Calu3 (cell line): ENCODE measurements at regions of chr14 and their contacts with region 1.

Region 1: GRCh38 chr14:36647824-36648753 is 13.6 kb upstream of the PAX9 start:
- DNase-seq: peak; percentile 63
- H3K4me3 Mint-ChIP-seq: peak overlapping the region; percentile 79
- H3K27ac Mint-ChIP-seq: no peak overlapping the region
- H3K4me1 Mint-ChIP-seq: no peaks in the 10 kb centered on the region
- H3K27me3 Mint-ChIP-seq: peaks cover 44% of the 10 kb centered on the region
- CTCF ChIP-seq: peak; percentile 55

Region 2: GRCh38 chr14:37116933-37117849 is 469.1 kb after region 1 on chr14:
- CTCF ChIA-PET with region 1: interaction called, 25 read pairs
- intact Hi-C with region 1: loop called (anchors 5 kb)
- DNase-seq: no peak
- H3K4me3 Mint-ChIP-seq: no peak overlapping the region
- H3K27ac Mint-ChIP-seq: no peak overlapping the region
- H3K4me1 Mint-ChIP-seq: peaks cover 8% of the 10 kb centered on the region
- H3K27me3 Mint-ChIP-seq: no peaks in the 10 kb centered on the region
- CTCF ChIP-seq: peak; percentile 20

Region 3: DNA sequence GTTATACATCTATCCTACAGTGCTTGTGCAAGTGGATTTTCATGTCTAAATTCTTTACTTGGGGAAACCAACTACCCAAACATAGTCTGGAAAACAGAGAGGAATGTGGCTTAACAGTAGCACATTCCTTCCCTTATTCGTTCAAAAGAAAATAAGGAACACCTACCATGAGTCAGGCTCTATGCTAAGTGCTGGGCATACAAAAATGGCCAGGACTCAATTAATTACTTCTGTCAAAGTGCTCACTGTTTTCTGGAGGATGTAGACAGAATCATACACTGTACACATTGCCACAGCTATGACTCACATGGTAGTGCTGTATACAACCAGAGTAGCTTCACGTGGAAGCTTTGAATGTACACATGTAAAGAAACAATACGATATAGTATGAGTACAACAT is 474.2 kb after region 1 on chr14:
- CTCF ChIA-PET with region 1: interaction called, 25 read pairs
- intact Hi-C with region 1: loop called (anchors 5 kb)
- DNase-seq: peak; percentile 23
- H3K4me3 Mint-ChIP-seq: no peak overlapping the region
- H3K27ac Mint-ChIP-seq: peak overlapping the region; percentile 61
- H3K4me1 Mint-ChIP-seq: peaks cover 18% of the 10 kb centered on the region
- H3K27me3 Mint-ChIP-seq: no peaks in the 10 kb centered on the region
- CTCF ChIP-seq: no peak

Region 4: GRCh38 chr14:37142835-37143401 is 494.8 kb after region 1 on chr14:
- CTCF ChIA-PET with region 1: no interaction called
- intact Hi-C with region 1: loop called (anchors 5 kb)
- DNase-seq: no peak
- H3K4me3 Mint-ChIP-seq: no peak overlapping the region
- H3K27ac Mint-ChIP-seq: no peak overlapping the region
- H3K4me1 Mint-ChIP-seq: no peaks in the 10 kb centered on the region
- H3K27me3 Mint-ChIP-seq: no peaks in the 10 kb centered on the region
- CTCF ChIP-seq: no peak

Region 5: DNA sequence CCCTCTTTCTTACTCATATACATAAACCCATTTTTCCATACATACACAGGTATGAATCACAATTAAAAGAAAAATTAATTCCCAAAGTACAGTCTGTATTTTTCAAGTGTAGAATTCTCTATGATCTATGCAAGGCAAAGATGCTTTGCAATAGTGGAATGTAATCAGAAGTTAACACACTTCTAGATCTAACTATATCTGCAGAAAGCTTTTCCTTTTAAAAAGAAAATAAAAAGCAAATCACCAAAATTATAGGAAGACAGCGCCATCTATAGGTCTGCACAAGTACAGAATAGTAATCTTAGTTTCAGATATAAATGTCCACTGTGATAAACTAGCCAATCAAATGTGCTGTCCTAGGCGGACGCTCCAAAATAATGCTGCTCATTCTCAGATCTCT is 502.3 kb after region 1 on chr14:
- CTCF ChIA-PET with region 1: interaction called, 7 read pairs
- intact Hi-C with region 1: loop called (anchors 2 kb)
- DNase-seq: peak; percentile 15
- H3K4me3 Mint-ChIP-seq: no peak overlapping the region
- H3K27ac Mint-ChIP-seq: no peak overlapping the region
- H3K4me1 Mint-ChIP-seq: peaks cover 11% of the 10 kb centered on the region
- H3K27me3 Mint-ChIP-seq: no peaks in the 10 kb centered on the region
- CTCF ChIP-seq: peak; percentile 52